Dendritic cell treated with granulocyte-macrophage colony-stimulating factor and Interleukin-4, amounts not matched to agents 40 ng/mL and 50 ng/mL, for 4 days (primary cell): ENCODE measurements at regions of chr1 and their contacts with region 1.

Region 1: DNA sequence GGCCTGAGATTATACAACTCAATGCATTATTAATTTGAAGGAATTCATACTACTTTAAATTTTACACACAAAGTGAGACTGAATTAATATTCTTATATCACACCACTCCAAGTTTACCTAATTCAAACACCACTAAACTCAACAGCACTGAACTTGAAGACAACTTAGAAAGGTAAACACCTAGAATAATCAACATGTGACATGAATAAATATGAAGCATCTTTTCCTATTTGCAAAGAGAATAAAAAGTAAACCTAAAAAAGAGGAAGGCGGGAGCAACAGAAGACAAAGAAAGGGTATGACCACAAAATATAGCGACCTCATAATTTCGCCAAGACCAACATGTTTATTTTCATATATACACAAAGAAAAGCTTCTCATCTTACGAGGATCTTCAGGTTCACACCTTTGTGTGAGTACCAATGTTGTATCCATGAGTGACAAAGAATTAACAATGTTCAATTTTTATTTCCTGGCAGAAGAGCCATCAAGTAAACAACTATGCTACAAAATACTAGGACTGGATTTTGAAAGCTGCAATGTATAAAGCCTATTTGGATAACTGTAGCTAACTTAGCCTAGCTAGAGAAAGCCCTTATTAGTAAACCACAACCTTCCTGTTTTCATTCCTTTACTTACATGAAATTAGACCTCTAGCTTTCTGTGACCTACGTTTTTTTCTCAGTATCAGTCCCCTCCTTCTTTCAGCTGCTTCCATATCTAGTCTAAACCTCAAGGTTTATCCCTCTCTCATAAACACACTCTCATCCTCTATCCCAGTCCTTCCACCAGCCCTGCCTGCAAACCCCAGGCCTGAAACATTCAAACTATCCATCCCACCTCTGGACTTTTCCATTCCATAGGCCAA is 21.2 kb upstream of the PHTF1 start:
- H3K4me3 Mint-ChIP-seq: no peak overlapping the region
- H3K27ac Mint-ChIP-seq: no peak overlapping the region
- H3K4me1 Mint-ChIP-seq: peaks cover 10% of the 10 kb centered on the region
- H3K27me3 Mint-ChIP-seq: no peaks in the 10 kb centered on the region

Region 2: GRCh38 chr1:113793878-113794834 is 13.6 kb after region 1 on chr1:
- intact Hi-C with region 1: loop called (anchors 2 kb)
- H3K4me3 Mint-ChIP-seq: no peak overlapping the region
- H3K27ac Mint-ChIP-seq: no peak overlapping the region
- H3K4me1 Mint-ChIP-seq: peaks cover 42% of the 10 kb centered on the region
- H3K27me3 Mint-ChIP-seq: no peaks in the 10 kb centered on the region